ENCODE measurements at regions of chr4 and their contacts with region 1.

Region 1: DNA sequence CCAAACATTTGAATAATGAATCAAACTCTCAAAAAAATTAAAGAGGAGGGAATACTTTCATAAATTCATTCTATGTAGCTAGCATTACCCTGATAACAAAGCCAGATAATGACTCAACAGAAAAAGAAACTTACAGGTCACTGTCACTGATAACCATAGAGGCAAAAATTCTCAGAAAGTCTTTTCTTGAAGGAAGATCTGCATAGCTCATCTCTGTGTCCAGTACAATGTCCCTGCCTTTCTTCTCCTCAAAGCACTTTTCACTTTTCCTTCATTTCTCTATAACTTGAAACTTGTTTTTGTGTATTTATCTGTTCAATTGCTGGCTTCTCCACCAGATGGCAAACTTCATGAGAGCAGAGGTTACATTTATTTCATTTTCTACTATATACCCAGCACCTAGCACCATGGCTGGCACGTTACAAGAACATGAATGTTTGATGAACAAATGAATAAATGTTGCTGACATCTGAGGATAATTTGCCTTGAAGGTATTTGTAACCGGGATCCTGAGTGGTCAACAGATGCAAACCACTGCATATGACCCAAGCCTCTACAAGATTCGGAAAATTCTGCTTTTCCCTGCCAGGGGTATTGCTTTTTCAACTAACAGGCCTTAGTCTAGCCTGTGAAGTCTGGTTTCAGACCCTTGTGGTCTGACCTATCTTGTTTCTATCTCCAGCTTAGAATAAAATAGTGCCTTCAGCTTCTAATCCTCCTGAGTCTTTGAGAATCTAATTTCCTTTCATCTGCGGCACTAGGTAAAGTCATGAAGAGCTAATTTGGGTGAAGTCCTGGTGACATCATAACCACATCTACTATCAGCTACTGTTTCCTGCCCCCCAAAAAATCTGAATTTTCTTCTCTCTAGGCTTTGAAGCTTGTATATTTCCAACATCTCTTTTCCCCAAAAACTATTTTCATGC is 52.5 kb upstream of the ANTXR2 start:
- DNase-seq: peak; percentile 30
- H3K4me3 Mint-ChIP-seq: peak overlapping the region; percentile 1
- H3K27ac Mint-ChIP-seq: peak overlapping the region; percentile 55
- H3K4me1 Mint-ChIP-seq: peaks cover 59% of the 10 kb centered on the region
- H3K27me3 Mint-ChIP-seq: no peaks in the 10 kb centered on the region

Region 2: GRCh38 chr4:79678472-79679202 is 446.9 kb before region 1 on chr4:
- intact Hi-C with region 1: loop called (anchors 5 kb)
- DNase-seq: no peak
- H3K4me3 Mint-ChIP-seq: no peak overlapping the region
- H3K27ac Mint-ChIP-seq: peak overlapping the region; percentile 14
- H3K4me1 Mint-ChIP-seq: peaks cover 29% of the 10 kb centered on the region
- H3K27me3 Mint-ChIP-seq: peaks cover 6% of the 10 kb centered on the region

Region 3: GRCh38 chr4:80058740-80059139 is 66.8 kb before region 1 on chr4:
- intact Hi-C with region 1: loop called (anchors 1 kb)
- DNase-seq: peak; percentile 41
- H3K4me3 Mint-ChIP-seq: peak overlapping the region; percentile 72
- H3K27ac Mint-ChIP-seq: peak overlapping the region; percentile 94
- H3K4me1 Mint-ChIP-seq: peaks cover 42% of the 10 kb centered on the region
- H3K27me3 Mint-ChIP-seq: no peaks in the 10 kb centered on the region

Region 4: DNA sequence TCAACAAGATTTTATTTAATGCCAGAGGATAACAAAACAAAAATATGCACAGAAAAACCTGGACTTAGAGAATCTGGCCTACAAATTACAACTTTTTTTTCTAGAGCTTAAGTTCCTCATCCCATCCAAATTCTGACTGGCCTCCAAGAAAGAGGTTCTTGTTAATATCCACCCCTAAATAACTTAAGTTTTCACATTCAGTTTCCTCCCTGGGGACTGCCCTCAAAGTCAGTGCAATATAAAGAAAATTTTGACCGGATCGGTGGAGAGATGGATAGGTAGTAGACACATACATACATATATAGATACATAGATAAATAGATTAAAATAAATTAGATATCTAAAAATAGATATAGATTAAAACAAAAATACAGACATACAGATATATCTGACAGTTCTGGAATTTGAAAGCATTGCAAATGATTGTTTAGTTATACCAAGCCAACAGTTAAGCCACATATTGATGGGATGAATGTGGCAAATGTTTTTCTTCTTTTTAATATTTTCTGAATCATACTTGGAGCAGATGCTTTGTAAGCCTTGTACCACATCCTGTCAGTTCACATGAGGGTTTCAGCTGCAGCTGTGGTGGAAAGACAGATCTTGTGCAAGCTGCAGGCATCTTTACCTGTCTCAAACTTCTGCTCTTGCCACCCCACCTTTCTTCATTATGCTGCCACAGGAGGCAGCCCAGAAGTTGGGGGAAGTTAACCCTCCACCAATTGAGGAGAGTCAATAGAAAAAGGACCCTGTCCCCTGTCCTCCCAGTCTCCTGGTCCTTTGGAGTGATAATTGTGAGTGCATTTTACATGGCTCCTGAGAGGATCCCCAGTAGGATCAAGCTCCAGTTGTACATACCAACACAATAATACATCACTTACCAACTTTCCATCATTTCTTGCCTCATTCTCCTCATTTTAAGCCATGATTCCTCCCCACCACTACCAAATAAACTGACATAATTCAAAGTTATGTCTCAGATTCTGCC is 13.3 kb after region 1 on chr4:
- intact Hi-C with region 1: loop called (anchors 1 kb)
- DNase-seq: peak; percentile 54
- H3K4me3 Mint-ChIP-seq: peak overlapping the region; percentile 2
- H3K27ac Mint-ChIP-seq: peak overlapping the region; percentile 83
- H3K4me1 Mint-ChIP-seq: peaks cover 62% of the 10 kb centered on the region
- H3K27me3 Mint-ChIP-seq: no peaks in the 10 kb centered on the region

Region 5: DNA sequence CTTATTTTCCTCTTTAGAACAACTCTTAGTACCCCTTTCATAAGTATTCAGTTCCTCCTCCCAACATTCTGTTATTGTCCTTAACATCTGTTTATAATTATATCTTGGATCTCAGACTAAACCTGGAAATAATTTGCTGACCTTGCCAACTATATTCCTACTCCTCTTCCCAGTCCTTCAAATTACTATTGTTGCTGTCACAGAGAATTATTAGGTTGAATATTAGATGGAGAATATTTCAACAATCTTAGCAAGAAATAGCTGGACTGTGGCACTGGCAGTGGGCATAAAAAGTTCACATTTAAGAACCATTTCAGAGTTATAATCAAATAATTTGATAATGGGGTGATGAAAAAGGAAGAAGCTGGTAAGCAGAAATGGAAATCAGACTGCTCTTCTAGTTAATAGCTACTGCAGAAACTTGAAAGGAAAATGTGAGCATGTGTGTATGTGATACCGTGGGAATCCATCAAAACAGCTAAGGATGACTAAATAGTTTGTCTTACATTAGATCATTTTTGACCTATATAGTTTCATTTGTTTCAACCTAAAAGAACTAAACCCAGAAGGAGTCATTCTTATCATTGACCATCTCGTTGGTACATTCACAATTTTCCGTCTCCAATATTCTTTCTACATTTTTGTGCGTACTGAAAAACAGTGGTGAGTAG is 28.5 kb after region 1 on chr4:
- intact Hi-C with region 1: loop called (anchors 1 kb)
- DNase-seq: no peak
- H3K4me3 Mint-ChIP-seq: peak overlapping the region; percentile 59
- H3K27ac Mint-ChIP-seq: peak overlapping the region; percentile 97
- H3K4me1 Mint-ChIP-seq: peaks cover 18% of the 10 kb centered on the region
- H3K27me3 Mint-ChIP-seq: peaks cover 3% of the 10 kb centered on the region

Region 6: GRCh38 chr4:80173401-80173800 is 47.9 kb after region 1 on chr4:
- intact Hi-C with region 1: loop called (anchors 1 kb)
- DNase-seq: peak; percentile 53
- H3K4me3 Mint-ChIP-seq: peak overlapping the region; percentile 37
- H3K27ac Mint-ChIP-seq: peak overlapping the region; percentile 89
- H3K4me1 Mint-ChIP-seq: peaks cover 47% of the 10 kb centered on the region
- H3K27me3 Mint-ChIP-seq: no peaks in the 10 kb centered on the region